Cardiac septum (tissue), 1 donor: ENCODE measurements at regions of chr5 and their contacts with region 1.

Region 1: DNA sequence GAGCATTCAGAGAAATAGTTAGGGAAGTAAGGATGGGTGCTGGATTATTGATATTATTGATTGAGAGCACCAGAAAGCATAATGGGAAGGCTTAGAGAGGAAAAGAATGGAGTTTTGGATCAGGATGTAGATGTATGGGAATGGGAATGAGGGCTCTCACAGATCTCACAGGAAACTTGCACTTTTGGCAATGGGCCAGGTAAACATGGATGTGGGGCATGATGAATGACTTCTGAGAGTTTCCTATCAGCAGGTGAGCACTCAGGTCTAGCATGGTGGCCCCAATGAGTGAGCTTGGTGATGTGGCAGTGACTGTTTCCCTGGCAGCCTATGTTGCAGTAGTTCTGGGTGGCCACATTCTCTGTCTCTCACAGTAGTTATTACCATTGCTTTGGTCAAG is 283.8 kb downstream of the FBXL7 start:
- DNase-seq: no peak

Region 2: DNA sequence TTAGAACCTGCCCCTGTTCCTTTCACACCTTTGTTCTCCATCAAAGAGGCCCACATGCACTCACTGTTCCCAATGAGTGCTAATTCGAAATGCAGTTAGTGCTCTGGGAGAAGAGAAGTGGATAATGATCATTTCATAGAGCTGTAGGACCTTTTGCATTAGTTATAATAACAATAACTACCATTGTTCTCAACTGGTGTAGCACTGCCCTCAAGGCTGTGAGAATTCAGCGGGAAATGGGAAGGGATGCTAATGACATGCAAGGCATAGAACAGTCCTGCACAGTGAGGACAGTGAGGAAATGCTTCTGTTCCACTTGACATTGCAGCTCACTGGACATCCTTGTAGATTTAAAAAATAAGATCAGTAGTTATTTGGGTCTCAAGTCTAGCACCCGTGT is 96.3 kb before region 1 on chr5:
- intact Hi-C with region 1: loop called (anchors 5 kb)
- DNase-seq: no peak

Region 3: GRCh38 chr5:16013334-16014065 is 229.8 kb after region 1 on chr5:
- intact Hi-C with region 1: no loop called
- DNase-seq: no peak